Endothelial cell of umbilical vein (primary cell): ENCODE measurements at regions of chr5 and their contacts with region 1.

Region 1: GRCh38 chr5:32753765-32754164 is 42.6 kb downstream of the NPR3 start:
- DNase-seq: no peak
- H3K4me3 ChIP-seq: no peak overlapping the region
- H3K27ac ChIP-seq: no peak overlapping the region
- H3K4me1 ChIP-seq: no peaks in the 10 kb centered on the region
- H3K27me3 ChIP-seq: no peaks in the 10 kb centered on the region
- CTCF ChIP-seq: no peak
- POLR2A ChIP-seq: no peak

Region 2: DNA sequence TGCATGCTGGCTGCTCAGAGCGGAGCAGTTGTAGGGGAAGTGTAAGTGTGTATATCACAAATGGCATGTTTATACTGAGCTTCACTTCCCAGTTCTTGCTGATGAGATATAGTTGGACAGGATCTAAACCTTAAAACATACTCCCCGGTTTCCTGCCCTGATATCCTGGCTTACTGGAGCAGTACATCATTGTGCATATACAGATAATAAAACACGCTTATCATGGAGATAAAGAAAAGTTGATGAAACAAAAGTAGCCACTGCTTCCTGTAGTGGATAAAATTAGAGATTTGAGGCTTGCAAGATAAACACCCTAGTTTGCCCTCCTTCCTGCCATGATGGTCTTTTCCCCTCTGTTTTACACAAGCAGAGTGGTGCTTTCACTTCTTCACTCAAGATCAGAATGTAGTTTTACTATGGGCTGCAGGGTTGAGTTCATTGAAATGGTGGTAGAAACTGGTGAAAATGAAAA is 27.6 kb before region 1 on chr5:
- CTCF ChIA-PET with region 1: no interaction called
- POLR2A ChIA-PET with region 1: no interaction called
- dilution Hi-C with region 1: no loop called
- intact Hi-C with region 1: loop called (anchors 1 kb)
- DNase-seq: no peak
- H3K4me3 ChIP-seq: no peak overlapping the region
- H3K27ac ChIP-seq: no peak overlapping the region
- H3K4me1 ChIP-seq: no peaks in the 10 kb centered on the region
- H3K27me3 ChIP-seq: peaks cover 3 to 5% of the 10 kb centered on the region in 2 experiments
- CTCF ChIP-seq: no peak
- POLR2A ChIP-seq: no peak